ENCODE measurements at regions of chr5 and their contacts with region 1.

Region 1: DNA sequence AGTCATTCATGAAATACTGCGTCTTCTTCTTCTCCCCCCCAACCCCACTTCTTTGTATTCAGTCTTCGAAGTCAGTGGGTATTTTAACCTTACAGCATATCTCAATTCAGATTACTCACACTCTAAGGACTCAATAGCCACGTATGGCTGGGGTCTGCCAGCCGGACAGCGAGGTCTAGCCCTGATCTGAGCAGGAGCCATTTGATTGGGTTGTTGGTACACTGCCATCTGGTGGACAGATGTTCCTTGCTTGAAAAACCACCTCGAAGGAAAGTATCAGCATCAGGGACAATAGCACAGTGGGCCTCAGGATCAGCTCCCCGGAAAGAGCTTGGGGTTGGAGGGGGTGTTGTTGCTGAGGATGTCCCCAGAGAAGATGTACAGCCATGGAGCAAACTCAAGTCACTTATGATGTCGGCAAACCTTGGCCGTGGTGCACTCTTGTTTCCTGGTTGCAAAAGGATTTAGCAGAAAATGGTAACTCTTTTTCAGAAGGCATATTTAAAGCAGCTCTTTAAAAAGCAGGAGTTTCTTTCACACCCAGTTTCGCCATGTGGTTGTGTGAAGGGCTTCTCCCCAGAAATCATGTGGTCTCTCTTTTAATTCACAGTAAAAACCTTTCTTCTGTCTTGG is 31.7 kb upstream of the KCNMB1 start:
- DNase-seq: peak; percentile 54 to 62 (median 57)
- ATAC-seq: peak; percentile 55
- H3K4me3 ChIP-seq: no peak overlapping the region
- H3K27ac ChIP-seq: no peak overlapping the region
- H3K4me1 ChIP-seq: peaks cover 4% of the 10 kb centered on the region
- H3K27me3 ChIP-seq: no peaks in the 10 kb centered on the region
- CTCF ChIP-seq: peak; percentile 42 to 69 (median 62)
- POLR2A ChIP-seq: no peak

Region 2: DNA sequence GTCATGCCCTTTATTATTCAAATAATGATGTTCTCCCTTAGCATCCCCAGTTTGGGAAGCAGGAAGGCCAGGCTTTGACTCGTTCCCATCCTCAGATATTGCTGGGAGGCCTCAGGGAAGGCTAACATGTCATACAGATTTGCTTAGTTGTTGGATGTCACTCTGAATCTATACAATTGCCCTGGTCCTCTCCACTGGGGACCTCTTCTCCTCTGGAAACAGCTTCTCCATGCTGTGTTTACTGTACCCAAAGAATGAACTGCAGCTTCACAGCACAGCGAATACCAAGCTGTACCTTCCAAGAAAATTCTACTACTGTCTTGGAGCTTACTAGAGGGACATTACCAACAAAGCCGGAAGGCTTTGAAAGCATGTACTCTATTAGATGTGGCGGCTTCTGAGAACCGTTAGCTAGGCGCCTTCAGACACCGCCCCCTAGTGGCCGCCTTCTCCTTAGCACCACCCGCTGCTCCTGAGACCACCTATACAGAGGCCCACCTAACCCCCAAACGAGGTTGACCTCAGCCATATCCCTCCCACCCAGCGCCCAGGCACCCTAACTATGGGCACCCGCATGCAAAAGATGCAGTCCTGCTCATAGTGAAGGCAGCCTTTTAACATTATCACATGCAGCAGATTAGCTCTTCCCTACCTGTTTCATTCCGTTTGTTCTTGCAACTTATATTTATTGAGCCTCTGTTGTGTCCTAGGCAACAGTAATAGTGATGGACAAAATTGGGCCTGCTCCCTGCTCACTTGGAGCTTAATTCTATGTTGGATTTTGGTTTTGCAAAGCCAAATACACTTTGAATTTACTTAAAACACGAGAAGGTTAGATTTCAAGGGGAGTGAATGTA is 350.1 kb before region 1 on chr5:
- intact Hi-C with region 1: no loop called
- DNase-seq: peak in 3 of 4 donors; percentile 7 to 45 (median 20)
- ATAC-seq: no peak
- H3K4me3 ChIP-seq: no peak overlapping the region
- H3K27ac ChIP-seq: no peak overlapping the region
- H3K4me1 ChIP-seq: no peaks in the 10 kb centered on the region
- H3K27me3 ChIP-seq: no peaks in the 10 kb centered on the region
- CTCF ChIP-seq: peak; percentile 18 to 66 (median 42)
- POLR2A ChIP-seq: no peak

Region 3: GRCh38 chr5:170267431-170268152 is 153.3 kb before region 1 on chr5:
- intact Hi-C with region 1: loop called (anchors 10 kb)
- DNase-seq: peak; percentile 63 to 72 (median 68)
- ATAC-seq: peak; percentile 63
- H3K4me3 ChIP-seq: no peak overlapping the region
- H3K27ac ChIP-seq: no peak overlapping the region
- H3K4me1 ChIP-seq: peaks cover 6% of the 10 kb centered on the region
- H3K27me3 ChIP-seq: no peaks in the 10 kb centered on the region
- CTCF ChIP-seq: peak; percentile 53 to 81 (median 71)
- POLR2A ChIP-seq: no peak

Measured in body of pancreas (tissue), 4 donors.